MCF 10A (cell line): ENCODE measurements at regions of chr17 and their contacts with region 1.

Region 1: DNA sequence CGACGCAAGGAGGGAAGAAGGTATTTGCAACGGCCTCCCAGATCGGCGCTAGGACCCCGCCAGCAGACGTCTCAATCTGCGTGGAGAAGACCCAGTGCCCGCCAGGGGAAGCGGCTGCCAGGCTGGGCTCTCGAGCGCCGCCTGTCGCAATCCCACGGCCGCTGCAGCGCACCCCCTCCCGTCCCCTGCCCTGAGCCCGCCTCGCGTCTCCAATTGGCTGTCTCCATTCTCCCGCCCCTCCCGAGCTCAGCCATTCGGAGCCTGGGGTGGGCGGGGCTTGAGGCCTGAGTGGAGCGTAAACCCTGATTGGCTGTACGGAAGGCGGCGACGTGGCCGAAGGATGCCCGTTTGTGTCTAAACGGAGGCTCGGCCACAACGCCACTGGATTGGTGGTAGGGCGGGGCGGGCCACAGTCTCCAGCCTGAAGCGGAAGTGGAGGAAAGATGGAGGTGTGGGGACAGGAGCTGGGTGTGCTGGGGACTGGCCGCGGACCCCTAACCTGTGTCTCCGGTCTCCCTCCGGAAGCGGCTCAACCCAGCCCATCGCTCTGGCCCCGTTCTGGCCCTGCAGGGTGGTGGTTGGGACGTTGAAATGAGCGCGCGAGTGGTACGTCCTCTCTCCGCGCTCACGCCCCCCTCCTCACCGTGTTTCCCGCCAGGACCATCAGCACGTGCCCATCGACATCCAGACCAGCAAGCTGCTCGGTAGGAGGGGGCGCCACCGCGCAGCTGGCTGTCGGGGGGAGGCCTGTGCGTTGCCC is at the start of gene CDK5RAP3:
- DNase-seq: peak; percentile 99
- H3K4me3 Mint-ChIP-seq: peak within 1 kb of the TSS; percentile 94
- H3K27ac Mint-ChIP-seq: peak within 1 kb of the TSS; percentile 88
- H3K4me1 Mint-ChIP-seq: peaks cover 29% of the 10 kb centered on the region
- H3K27me3 Mint-ChIP-seq: no peaks in the 10 kb centered on the region
- CTCF ChIP-seq: peak; percentile 91
- total RNA-seq, gene CDK5RAP3: 132 and 149 TPM in 2 replicates

Region 2: DNA sequence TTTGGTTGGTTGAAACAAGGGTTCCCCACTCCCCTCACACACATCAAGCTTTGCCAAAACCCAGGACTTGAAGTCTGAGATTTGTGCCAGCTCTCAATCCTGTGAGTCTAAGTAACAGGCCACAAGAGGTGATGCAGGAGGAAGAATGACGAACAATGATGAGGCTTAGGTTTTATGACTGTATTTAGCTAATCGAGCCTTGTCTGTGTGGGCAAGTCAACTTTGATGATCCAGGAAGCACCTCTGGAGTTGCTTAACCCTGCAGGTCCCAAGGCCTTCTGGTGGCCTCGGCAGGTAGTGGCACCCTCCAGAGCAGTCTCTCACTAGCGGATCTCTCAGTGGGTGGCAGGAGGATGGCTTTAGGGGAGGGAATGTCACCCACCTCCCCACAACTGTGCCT is 28.7 kb after region 1 on chr17:
- CTCF ChIA-PET with region 1: interaction called, 12 read pairs
- POLR2A ChIA-PET with region 1: interaction called, 7 read pairs
- intact Hi-C with region 1: no loop called
- DNase-seq: no peak
- H3K4me3 Mint-ChIP-seq: no peak overlapping the region
- H3K27ac Mint-ChIP-seq: no peak overlapping the region
- H3K4me1 Mint-ChIP-seq: peaks cover 8% of the 10 kb centered on the region
- H3K27me3 Mint-ChIP-seq: no peaks in the 10 kb centered on the region
- CTCF ChIP-seq: no peak